Activated CD4-positive, alpha-beta T cell treated with anti-CD3 and anti-CD28 coated beads for 36 hours (primary cell): ENCODE measurements at regions of chr12 and their contacts with region 1.

Region 1: GRCh38 chr12:16972897-16973770 is 367.2 kb upstream of the LMO3 start:
- DNase-seq: no peak
- ATAC-seq: no peak
- H3K4me3 Mint-ChIP-seq: no peak overlapping the region
- H3K27ac Mint-ChIP-seq: no peak overlapping the region
- H3K4me1 Mint-ChIP-seq: no peaks in the 10 kb centered on the region
- H3K27me3 Mint-ChIP-seq: no peaks in the 10 kb centered on the region

Region 2: GRCh38 chr12:17148706-17149105 is 175.6 kb after region 1 on chr12:
- CTCF ChIA-PET with region 1: no interaction called
- POLR2A ChIA-PET with region 1: no interaction called
- intact Hi-C with region 1: no loop called
- DNase-seq: no peak
- ATAC-seq: no peak
- H3K4me3 Mint-ChIP-seq: no peak overlapping the region
- H3K27ac Mint-ChIP-seq: no peak overlapping the region
- H3K4me1 Mint-ChIP-seq: no peaks in the 10 kb centered on the region
- H3K27me3 Mint-ChIP-seq: no peaks in the 10 kb centered on the region

Region 3: DNA sequence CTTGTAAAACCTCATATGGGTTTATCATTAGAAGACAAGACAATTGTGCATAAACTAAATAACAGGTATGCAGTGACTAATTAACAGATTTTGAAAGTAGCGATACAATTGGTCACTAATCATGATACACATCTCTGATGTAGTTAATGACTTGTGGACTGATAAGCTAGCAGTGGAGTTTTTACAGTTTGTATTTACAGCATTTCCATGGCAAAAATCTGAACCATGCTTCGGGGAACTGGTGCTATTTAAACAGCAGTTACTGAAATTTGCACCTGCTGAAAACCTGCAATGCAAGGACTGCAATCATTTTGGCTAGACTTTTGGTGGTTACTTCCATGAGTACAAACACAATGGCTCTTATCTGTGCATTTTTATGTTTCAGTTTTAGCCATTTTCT is 645.7 kb after region 1 on chr12:
- CTCF ChIA-PET with region 1: no interaction called
- POLR2A ChIA-PET with region 1: no interaction called
- intact Hi-C with region 1: loop called in 1 of 2 experiments (anchors 5 kb)
- DNase-seq: no peak
- ATAC-seq: no peak
- H3K4me3 Mint-ChIP-seq: no peak overlapping the region
- H3K27ac Mint-ChIP-seq: no peak overlapping the region
- H3K4me1 Mint-ChIP-seq: no peaks in the 10 kb centered on the region
- H3K27me3 Mint-ChIP-seq: no peaks in the 10 kb centered on the region

Region 4: GRCh38 chr12:17666641-17667324 is 693.6 kb after region 1 on chr12:
- CTCF ChIA-PET with region 1: no interaction called
- POLR2A ChIA-PET with region 1: no interaction called
- intact Hi-C with region 1: no loop called
- DNase-seq: no peak
- ATAC-seq: no peak
- H3K4me3 Mint-ChIP-seq: no peak overlapping the region
- H3K27ac Mint-ChIP-seq: no peak overlapping the region
- H3K4me1 Mint-ChIP-seq: no peaks in the 10 kb centered on the region
- H3K27me3 Mint-ChIP-seq: no peaks in the 10 kb centered on the region